Sigmoid colon (tissue), 7 donors: ENCODE measurements at regions of chr6 and their contacts with region 1.

Region 1: DNA sequence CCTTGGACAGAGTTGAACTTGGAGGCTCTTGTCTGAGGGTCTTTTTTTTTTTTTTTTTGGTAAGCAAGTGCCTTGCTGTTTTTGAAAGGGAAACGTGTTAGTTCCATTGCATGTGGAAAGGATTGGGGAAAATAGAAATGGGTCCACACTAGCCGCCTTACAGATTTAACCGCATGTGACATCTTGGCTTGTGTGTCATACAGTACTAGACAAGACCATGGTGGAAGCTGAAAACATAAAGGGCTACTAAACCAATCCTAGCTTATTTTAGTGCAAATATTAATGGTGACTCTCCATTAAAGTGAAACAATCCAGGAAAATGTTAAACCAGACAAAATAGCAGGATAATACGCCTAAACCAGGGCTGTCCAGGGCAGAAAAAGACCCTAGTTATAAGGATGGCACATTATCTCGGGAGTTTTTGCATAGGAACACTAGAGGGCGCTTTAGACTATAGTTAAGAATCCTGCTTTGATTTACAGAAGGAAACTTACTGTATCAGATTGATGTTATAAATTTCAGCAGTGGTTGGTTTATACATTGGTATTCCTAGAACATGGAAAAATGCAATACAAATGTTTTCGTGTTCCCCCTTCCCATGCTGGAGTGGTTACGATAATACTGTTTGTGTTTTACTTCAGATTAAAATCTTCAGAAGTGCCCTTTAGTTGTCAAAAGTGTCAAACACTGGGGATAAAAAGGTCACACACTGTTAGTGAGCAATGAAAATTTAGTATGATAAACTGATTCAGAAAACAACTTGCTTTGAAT is 59.8 kb upstream of the DEK start:
- DNase-seq: no peak
- H3K4me3 ChIP-seq: no peak overlapping the region
- H3K27ac ChIP-seq: no peak overlapping the region
- H3K4me1 ChIP-seq: peaks cover 0 to 11% (median 0%) of the 10 kb centered on the region in 4 donors
- H3K27me3 ChIP-seq: no peaks in the 10 kb centered on the region
- CTCF ChIP-seq: peak; percentile 44 to 76 (median 70)
- EP300 ChIP-seq: no peak
- POLR2A ChIP-seq: no peak

Region 2: DNA sequence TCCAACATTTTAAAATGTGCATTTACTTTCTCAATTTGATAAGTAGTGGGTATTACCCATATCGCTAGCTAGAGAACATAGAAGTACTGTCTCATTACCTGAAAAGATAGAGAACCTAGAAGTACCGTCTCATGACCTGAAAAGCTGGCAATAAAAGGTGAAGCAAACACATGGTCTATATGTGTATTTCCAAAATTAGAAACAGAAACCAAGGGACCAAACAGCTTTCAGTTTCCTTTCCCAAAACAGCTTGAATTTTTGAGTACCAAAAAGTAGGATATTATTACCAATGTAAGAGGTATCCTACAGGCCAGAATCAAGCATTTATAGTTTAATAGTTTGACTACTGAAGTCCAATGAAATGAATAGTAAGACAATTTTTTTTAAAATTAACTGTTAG is 413.9 kb before region 1 on chr6:
- intact Hi-C with region 1: no loop called
- DNase-seq: no peak
- H3K4me3 ChIP-seq: no peak overlapping the region
- H3K27ac ChIP-seq: no peak overlapping the region
- H3K4me1 ChIP-seq: peaks cover 0 to 45% (median 28%) of the 10 kb centered on the region in 4 donors
- H3K27me3 ChIP-seq: no peaks in the 10 kb centered on the region
- CTCF ChIP-seq: no peak
- EP300 ChIP-seq: no peak
- POLR2A ChIP-seq: no peak

Region 3: DNA sequence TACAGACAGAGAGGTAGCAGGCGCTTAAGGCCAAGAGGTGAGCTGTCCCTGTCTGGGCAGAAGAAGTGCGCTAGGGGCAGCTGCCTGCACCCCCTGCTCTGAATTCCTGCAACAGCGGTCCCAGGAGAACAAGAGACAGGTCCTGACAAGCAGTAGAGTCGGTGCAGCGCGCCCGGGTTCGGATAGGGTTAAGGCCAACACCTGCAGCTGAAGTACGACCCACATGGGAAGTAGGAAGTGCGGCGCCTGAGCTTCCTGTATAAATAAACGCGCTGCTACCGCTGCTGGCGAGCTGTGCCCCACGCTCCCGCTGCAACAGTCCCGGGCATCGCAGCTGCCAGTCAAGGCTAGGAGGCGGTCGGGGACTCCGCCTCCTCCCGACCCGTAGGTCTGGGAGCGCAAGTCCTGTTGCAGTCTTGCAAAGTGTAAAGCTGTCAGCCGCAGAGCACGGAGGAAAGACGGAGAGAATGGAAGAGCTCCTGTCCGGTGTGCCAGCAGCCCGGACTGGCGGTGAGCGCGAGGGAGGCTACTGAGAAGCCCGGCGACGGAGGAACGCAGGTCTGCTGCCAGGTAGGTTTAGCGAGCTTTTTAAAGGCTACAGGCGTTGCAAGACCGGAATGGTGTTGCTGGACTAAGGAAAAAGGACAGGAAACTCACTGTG is 63.1 kb after region 1 on chr6 and contains the start of gene RNF144B:
- intact Hi-C with region 1: no loop called
- DNase-seq: peak; percentile 85
- H3K4me3 ChIP-seq: peak within 1 kb of the TSS; percentile 33 to 59 (median 52)
- H3K27ac ChIP-seq: peak within 1 kb of the TSS; percentile 43 to 76 (median 74)
- H3K4me1 ChIP-seq: peaks cover 0 to 34% (median 24%) of the 10 kb centered on the region in 4 donors
- H3K27me3 ChIP-seq: peaks cover 0 to 4% (median 0%) of the 10 kb centered on the region in 3 donors
- CTCF ChIP-seq: no peak
- EP300 ChIP-seq: no peak
- POLR2A ChIP-seq: peak; percentile 50 to 67
- total RNA-seq, gene RNF144B: 4.6 to 14.8 (median 8.5) TPM

Region 4: DNA sequence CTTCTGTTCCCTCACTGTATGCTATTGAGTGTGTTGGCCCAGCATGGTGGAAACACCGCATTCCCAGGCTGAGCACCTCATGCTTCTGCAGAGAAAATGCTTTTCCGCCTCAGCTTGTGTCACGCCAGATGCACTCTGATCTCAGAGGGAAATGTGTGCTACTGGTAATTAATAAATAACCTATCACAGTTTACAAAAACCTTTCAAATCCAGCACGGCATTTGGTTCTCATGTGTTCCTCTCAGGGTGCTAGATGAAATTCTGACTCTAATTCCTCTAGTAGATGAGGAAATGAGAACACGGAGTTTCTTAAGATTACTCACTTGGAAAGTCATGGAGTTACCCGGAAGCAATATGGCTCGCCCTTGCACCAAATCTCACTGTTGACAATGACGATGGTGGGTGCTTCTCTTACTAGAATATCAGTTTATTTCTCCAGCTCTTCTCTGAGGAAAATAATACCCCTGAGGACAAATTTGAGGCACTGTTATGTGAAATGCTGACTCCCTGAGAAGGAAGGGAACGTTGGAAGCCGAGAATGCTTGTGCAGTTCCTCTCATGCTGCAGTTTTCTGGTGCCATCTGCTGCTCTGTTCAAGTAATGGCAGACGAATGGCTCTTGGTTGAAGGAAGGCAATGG is 179.6 kb after region 1 on chr6:
- intact Hi-C with region 1: loop called (anchors 1 kb)
- DNase-seq: peak; percentile 78
- H3K4me3 ChIP-seq: peak overlapping the region in 3 of 4 donors; percentile 27 to 33 (median 28)
- H3K27ac ChIP-seq: peak overlapping the region in 2 of 4 donors; percentile 15 to 21
- H3K4me1 ChIP-seq: peaks cover 0 to 4% (median 0%) of the 10 kb centered on the region in 4 donors
- H3K27me3 ChIP-seq: no peaks in the 10 kb centered on the region
- CTCF ChIP-seq: peak; percentile 74 to 90 (median 82)
- EP300 ChIP-seq: no peak
- POLR2A ChIP-seq: no peak